CD8-positive, alpha-beta memory T cell (primary cell): ENCODE measurements at regions of chr1 and their contacts with region 1.

Region 1: GRCh38 chr1:77779529-77780281 is at the start of gene MIGA1:
- DNase-seq: peak; percentile 77 to 92 (median 85)
- H3K4me3 ChIP-seq: peak within 1 kb of the TSS; percentile 81
- H3K4me3 Mint-ChIP-seq: peak within 1 kb of the TSS; percentile 90 to 96 (median 94)
- H3K27ac ChIP-seq: peak within 1 kb of the TSS; percentile 73
- H3K27ac Mint-ChIP-seq: peak within 1 kb of the TSS; percentile 81 to 96 (median 90)
- H3K4me1 ChIP-seq: peaks cover 32% of the 10 kb centered on the region
- H3K4me1 Mint-ChIP-seq: peaks cover 38 to 53% (median 49%) of the 10 kb centered on the region in 3 donors
- H3K27me3 ChIP-seq: no peaks in the 10 kb centered on the region
- H3K27me3 Mint-ChIP-seq: no peaks in the 10 kb centered on the region
- total RNA-seq, gene MIGA1: 10.2 to 11.7 TPM

Region 2: GRCh38 chr1:77683160-77684148 is 96.3 kb before region 1 on chr1:
- CTCF ChIA-PET with region 1: no interaction called
- POLR2A ChIA-PET with region 1: interaction called, 19 read pairs
- DNase-seq: peak; percentile 90 to 95 (median 93)
- H3K4me3 ChIP-seq: peak overlapping the region; percentile 64
- H3K4me3 Mint-ChIP-seq: peak overlapping the region; percentile 89 to 98 (median 96)
- H3K27ac ChIP-seq: peak overlapping the region; percentile 84
- H3K27ac Mint-ChIP-seq: peak overlapping the region; percentile 93 to 98 (median 96)
- H3K4me1 ChIP-seq: peaks cover 31% of the 10 kb centered on the region
- H3K4me1 Mint-ChIP-seq: peaks cover 30 to 49% (median 40%) of the 10 kb centered on the region in 3 donors
- H3K27me3 ChIP-seq: no peaks in the 10 kb centered on the region
- H3K27me3 Mint-ChIP-seq: peaks cover 0 to 3% of the 10 kb centered on the region in 2 donors

Region 3: DNA sequence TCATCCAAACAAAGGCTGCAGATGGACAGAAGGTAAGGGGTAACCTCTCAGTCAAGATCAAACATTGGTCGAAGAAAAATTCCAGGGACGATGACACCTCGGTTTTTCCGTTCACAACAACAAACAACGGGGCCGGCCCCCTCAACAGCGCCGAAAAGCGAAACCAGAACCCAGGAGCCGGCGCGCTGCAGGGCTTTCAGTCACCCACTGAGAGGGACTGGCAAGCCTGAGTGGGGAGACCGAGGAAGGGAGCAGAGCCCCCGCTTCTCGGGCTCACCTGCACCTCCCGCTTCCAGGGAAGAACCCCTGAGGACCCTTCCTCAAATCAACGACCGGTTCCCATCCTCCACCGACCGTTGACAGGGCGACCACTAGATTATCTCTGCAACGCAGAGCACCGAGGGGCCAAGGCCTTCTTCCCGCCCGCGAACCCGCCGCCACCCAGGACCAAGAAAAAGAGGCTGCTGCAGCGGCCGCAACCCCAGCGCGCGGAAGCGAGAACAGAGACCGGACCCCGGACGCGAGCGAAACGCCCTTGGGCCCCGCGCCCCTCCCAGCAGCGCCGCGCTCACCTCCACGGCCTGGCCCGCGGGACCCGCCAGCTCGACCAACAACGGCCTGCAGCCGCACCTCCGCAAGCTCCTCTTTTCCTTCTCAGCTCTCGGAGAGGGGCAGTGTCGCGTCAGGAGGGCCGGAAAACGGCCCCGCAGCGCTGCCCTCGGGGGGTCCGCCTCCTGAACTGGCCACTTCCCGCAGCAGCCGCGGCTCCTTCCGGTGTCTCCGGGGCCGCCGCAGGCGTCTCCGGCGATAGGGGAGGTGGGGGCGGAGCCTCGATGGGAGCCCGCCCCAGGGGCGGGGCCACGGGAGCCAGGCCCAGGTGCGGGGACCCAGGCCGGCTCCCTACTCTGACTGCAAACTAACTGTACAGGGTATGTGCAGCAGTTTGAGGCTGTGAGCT is 20.4 kb before region 1 on chr1 and contains the start of gene USP33:
- CTCF ChIA-PET with region 1: interaction called, 4 read pairs
- POLR2A ChIA-PET with region 1: interaction called, 11 read pairs
- DNase-seq: peak; percentile 87 to 93 (median 91)
- H3K4me3 ChIP-seq: peak within 1 kb of the TSS; percentile 59
- H3K4me3 Mint-ChIP-seq: peak within 1 kb of the TSS; percentile 96 to 99 (median 96)
- H3K27ac ChIP-seq: peak within 1 kb of the TSS; percentile 83
- H3K27ac Mint-ChIP-seq: peak within 1 kb of the TSS; percentile 93 to 99 (median 94)
- H3K4me1 ChIP-seq: peaks cover 45% of the 10 kb centered on the region
- H3K4me1 Mint-ChIP-seq: peaks cover 40 to 53% (median 51%) of the 10 kb centered on the region in 3 donors
- H3K27me3 ChIP-seq: no peaks in the 10 kb centered on the region
- H3K27me3 Mint-ChIP-seq: no peaks in the 10 kb centered on the region
- total RNA-seq, gene USP33: 41.8 to 43.1 TPM

Region 4: GRCh38 chr1:77802026-77802425 is 22.3 kb after region 1 on chr1:
- CTCF ChIA-PET with region 1: no interaction called
- POLR2A ChIA-PET with region 1: no interaction called
- DNase-seq: no peak
- H3K4me3 ChIP-seq: no peak overlapping the region
- H3K4me3 Mint-ChIP-seq: no peak overlapping the region
- H3K27ac ChIP-seq: no peak overlapping the region
- H3K27ac Mint-ChIP-seq: peak overlapping the region in 1 of 8 donors; percentile 52
- H3K4me1 ChIP-seq: no peaks in the 10 kb centered on the region
- H3K4me1 Mint-ChIP-seq: peaks cover 26 to 39% (median 34%) of the 10 kb centered on the region in 3 donors
- H3K27me3 ChIP-seq: no peaks in the 10 kb centered on the region
- H3K27me3 Mint-ChIP-seq: no peaks in the 10 kb centered on the region